PC-9 (cell line): ENCODE measurements at regions of chr22 and their contacts with region 1.

Region 1: GRCh38 chr22:35638410-35638809 is 9.8 kb upstream of the APOL6 start:
- DNase-seq: no peak
- H3K4me3 ChIP-seq: no peak overlapping the region
- H3K27ac ChIP-seq: no peak overlapping the region
- H3K4me1 ChIP-seq: peaks cover 5% of the 10 kb centered on the region
- H3K27me3 ChIP-seq: no peaks in the 10 kb centered on the region
- CTCF ChIP-seq: no peak

Region 2: GRCh38 chr22:35792506-35792905 is 154.1 kb after region 1 on chr22:
- CTCF ChIA-PET with region 1: no interaction called
- POLR2A ChIA-PET with region 1: interaction called, 15 read pairs
- intact Hi-C with region 1: no loop called
- DNase-seq: peak; percentile 38 to 80
- H3K4me3 ChIP-seq: no peak overlapping the region; the same call in 1 of the 2 replicates
- H3K27ac ChIP-seq: peak overlapping the region; percentile 38; the same call in 1 of the 2 replicates
- H3K4me1 ChIP-seq: peaks cover 17% of the 10 kb centered on the region
- H3K27me3 ChIP-seq: no peaks in the 10 kb centered on the region
- CTCF ChIP-seq: no peak

Region 3: DNA sequence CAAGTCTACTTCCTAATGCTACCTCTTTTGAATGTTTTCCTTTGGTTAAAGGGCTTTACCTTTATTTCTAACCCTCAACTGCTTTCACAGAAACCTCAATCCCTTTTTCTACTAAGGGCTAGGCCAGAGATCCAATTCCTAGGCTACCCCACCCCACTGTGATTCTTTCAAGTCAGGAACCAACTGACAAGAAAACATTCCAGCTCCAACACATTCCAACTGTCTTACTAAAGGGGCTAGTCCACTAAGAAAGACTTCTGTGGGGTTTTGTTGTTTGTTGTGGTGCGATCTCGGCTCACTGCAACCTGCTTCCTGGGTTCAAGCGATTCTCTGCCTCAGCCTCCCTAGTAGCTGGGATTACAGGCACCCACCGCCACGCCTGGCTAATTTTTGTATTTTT is 230.5 kb after region 1 on chr22:
- CTCF ChIA-PET with region 1: no interaction called
- POLR2A ChIA-PET with region 1: interaction called, 15 read pairs
- intact Hi-C with region 1: no loop called
- DNase-seq: no peak
- H3K4me3 ChIP-seq: no peak overlapping the region
- H3K27ac ChIP-seq: peak overlapping the region; percentile 17; the same call in 1 of the 2 replicates
- H3K4me1 ChIP-seq: peaks cover 5% of the 10 kb centered on the region; the same call in 1 of the 2 replicates
- H3K27me3 ChIP-seq: no peaks in the 10 kb centered on the region
- CTCF ChIP-seq: no peak